B cell (primary cell): ENCODE measurements at regions of chr1 and their contacts with region 1.

Region 1: GRCh38 chr1:11262171-11263049 is at the start of gene MTOR:
- DNase-seq: peak; percentile 99
- ATAC-seq: peak; percentile 97
- H3K4me3 ChIP-seq: peak within 1 kb of the TSS; percentile 88 to 95 (median 89)
- H3K4me3 Mint-ChIP-seq: peak within 1 kb of the TSS; percentile 92
- H3K27ac ChIP-seq: peak within 1 kb of the TSS; percentile 47 to 92
- H3K27ac Mint-ChIP-seq: peak within 1 kb of the TSS; percentile 83
- H3K4me1 ChIP-seq: peaks cover 8 to 17% of the 10 kb centered on the region in 2 donors
- H3K4me1 Mint-ChIP-seq: peaks cover 17% of the 10 kb centered on the region
- H3K27me3 ChIP-seq: no peaks in the 10 kb centered on the region
- H3K27me3 Mint-ChIP-seq: no peaks in the 10 kb centered on the region
- CTCF ChIP-seq: peak; percentile 20
- total RNA-seq, gene MTOR: 50.7 and 52.3 TPM in 2 replicates

Region 2: GRCh38 chr1:10960411-10961299 is 301.8 kb before region 1 on chr1:
- CTCF ChIA-PET with region 1: no interaction called
- POLR2A ChIA-PET with region 1: no interaction called
- intact Hi-C with region 1: no loop called
- DNase-seq: peak; percentile 82
- ATAC-seq: peak; percentile 78
- H3K4me3 ChIP-seq: no peak overlapping the region
- H3K4me3 Mint-ChIP-seq: no peak overlapping the region
- H3K27ac ChIP-seq: no peak overlapping the region
- H3K27ac Mint-ChIP-seq: no peak overlapping the region
- H3K4me1 ChIP-seq: peaks cover 9 to 18% of the 10 kb centered on the region in 2 donors
- H3K4me1 Mint-ChIP-seq: peaks cover 10% of the 10 kb centered on the region
- H3K27me3 ChIP-seq: peaks cover 0 to 9% (median 4%) of the 10 kb centered on the region in 4 experiments
- H3K27me3 Mint-ChIP-seq: peaks cover 20% of the 10 kb centered on the region
- CTCF ChIP-seq: peak; percentile 79

Region 3: DNA sequence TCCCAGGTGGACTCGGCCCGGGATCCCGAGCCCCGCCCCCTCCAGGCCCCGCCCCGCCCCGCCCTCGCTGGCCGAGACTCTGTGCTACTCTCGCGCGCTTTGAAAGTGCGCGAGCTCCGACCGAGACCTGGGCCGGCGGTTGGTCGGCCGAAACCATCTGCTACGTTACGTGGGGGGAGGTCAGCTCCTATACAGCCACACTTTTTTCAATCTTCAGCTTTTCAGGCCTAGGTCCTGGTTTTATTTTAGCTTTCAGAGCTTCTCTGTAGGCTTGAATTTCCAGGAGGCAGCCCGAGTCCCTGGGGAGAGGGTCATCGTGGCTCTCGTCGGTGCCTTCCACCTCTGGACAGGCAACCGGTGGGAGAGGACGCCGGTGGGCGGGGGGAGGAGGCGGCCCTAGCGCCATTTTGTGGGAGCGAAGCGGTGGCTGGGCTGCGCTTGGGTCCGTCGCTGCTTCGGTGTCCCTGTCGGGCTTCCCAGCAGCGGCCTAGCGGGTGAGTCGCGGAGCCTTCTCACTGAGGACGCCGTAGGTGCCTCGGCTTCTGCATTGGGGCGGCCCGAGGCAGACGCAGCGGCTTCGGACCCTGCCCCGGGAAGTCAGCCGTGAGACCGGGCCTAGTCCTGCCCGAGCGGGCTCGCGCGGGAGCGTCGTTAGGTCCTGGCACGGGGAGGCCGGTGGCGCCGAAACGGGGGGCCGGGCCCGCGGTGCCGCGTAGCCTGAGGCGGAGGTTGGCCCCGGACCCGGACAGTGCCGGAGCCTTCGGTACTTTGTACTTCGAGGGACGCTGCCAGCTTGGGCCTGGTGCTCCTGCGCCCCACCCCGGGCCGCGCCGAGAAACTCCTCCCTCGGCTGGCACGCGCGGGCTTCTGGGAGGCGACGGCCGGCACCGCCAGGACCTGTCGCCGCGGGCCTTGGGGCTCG is 249.9 kb before region 1 on chr1 and contains the start of gene TARDBP:
- CTCF ChIA-PET with region 1: no interaction called
- POLR2A ChIA-PET with region 1: interaction called, 4 read pairs
- intact Hi-C with region 1: loop called (anchors 1 kb)
- DNase-seq: peak; percentile 98
- ATAC-seq: peak; percentile 88
- H3K4me3 ChIP-seq: peak within 1 kb of the TSS; percentile 81 to 97 (median 95)
- H3K4me3 Mint-ChIP-seq: peak within 1 kb of the TSS; percentile 86
- H3K27ac ChIP-seq: peak within 1 kb of the TSS; percentile 98 to 99
- H3K27ac Mint-ChIP-seq: peak within 1 kb of the TSS; percentile 99
- H3K4me1 ChIP-seq: peaks cover 15 to 26% of the 10 kb centered on the region in 2 donors
- H3K4me1 Mint-ChIP-seq: peaks cover 29% of the 10 kb centered on the region
- H3K27me3 ChIP-seq: no peaks in the 10 kb centered on the region
- H3K27me3 Mint-ChIP-seq: no peaks in the 10 kb centered on the region
- CTCF ChIP-seq: no peak
- total RNA-seq, gene TARDBP: 222 and 226 TPM in 2 replicates

Region 4: GRCh38 chr1:11227106-11228077 is 35.0 kb before region 1 on chr1:
- CTCF ChIA-PET with region 1: interaction called, 4 read pairs
- POLR2A ChIA-PET with region 1: no interaction called
- intact Hi-C with region 1: loop called (anchors 1 kb)
- DNase-seq: peak; percentile 54
- ATAC-seq: peak; percentile 77
- H3K4me3 ChIP-seq: peak overlapping the region in 2 of 5 experiments; percentile 21 to 42
- H3K4me3 Mint-ChIP-seq: peak overlapping the region; percentile 70
- H3K27ac ChIP-seq: peak overlapping the region; percentile 33 to 72
- H3K27ac Mint-ChIP-seq: peak overlapping the region; percentile 82
- H3K4me1 ChIP-seq: peaks cover 41 to 43% of the 10 kb centered on the region in 2 donors
- H3K4me1 Mint-ChIP-seq: peaks cover 51% of the 10 kb centered on the region
- H3K27me3 ChIP-seq: no peaks in the 10 kb centered on the region
- H3K27me3 Mint-ChIP-seq: no peaks in the 10 kb centered on the region
- CTCF ChIP-seq: no peak

Region 5: DNA sequence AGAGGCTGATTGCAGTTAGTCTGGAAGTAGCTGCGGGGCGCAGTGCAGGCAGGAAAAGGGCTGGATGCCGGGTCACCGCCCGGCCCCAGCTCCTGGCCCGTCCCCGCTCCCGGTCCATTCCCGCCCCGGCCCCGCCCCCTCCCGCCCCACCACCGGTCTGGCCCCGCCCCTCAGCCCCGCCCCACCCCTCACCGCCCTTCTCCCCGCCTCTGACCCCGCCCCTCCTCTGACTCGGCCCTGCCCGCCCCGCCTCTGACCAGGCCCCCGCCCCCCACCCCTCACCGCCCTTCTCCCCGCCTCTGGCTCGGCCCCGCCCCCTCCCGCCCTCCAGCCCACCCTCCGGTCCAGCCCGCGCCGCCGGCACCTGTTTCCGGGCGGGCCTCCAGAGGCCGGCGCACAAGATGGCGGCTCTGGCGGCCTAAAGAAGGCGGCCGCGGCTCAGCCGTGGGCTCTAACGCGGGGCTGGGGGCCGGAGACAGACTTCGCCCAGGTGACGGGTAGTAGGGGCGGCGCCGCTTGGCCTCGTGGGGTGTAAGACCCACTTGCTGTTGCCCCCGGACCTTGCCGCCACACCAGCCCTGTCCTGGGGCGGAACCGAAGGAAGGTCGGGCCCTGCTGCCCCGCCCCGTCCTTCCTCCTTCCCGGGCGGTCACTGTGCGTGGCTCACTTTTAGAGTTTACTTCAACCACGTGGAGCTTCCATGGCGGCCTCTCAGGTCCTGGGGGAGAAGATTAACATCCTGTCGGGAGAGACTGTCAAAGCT is 10.6 kb after region 1 on chr1 and contains the start of gene UBIAD1:
- CTCF ChIA-PET with region 1: no interaction called
- POLR2A ChIA-PET with region 1: interaction called, 13 read pairs
- intact Hi-C with region 1: loop called (anchors 1 kb)
- DNase-seq: peak; percentile 91
- ATAC-seq: peak; percentile 87
- H3K4me3 ChIP-seq: peak within 1 kb of the TSS; percentile 51 to 96 (median 95)
- H3K4me3 Mint-ChIP-seq: peak within 1 kb of the TSS; percentile 87
- H3K27ac ChIP-seq: peak within 1 kb of the TSS; percentile 77 to 96
- H3K27ac Mint-ChIP-seq: peak within 1 kb of the TSS; percentile 96
- H3K4me1 ChIP-seq: peaks cover 17 to 34% of the 10 kb centered on the region in 2 donors
- H3K4me1 Mint-ChIP-seq: peaks cover 30% of the 10 kb centered on the region
- H3K27me3 ChIP-seq: no peaks in the 10 kb centered on the region
- H3K27me3 Mint-ChIP-seq: no peaks in the 10 kb centered on the region
- CTCF ChIP-seq: no peak
- total RNA-seq, gene UBIAD1: 28.1 and 30.9 TPM in 2 replicates